Activated CD4-positive, alpha-beta T cell treated with anti-CD3 and anti-CD28 coated beads for 36 hours (primary cell): ENCODE measurements at regions of chr17 and their contacts with region 1.

Region 1: DNA sequence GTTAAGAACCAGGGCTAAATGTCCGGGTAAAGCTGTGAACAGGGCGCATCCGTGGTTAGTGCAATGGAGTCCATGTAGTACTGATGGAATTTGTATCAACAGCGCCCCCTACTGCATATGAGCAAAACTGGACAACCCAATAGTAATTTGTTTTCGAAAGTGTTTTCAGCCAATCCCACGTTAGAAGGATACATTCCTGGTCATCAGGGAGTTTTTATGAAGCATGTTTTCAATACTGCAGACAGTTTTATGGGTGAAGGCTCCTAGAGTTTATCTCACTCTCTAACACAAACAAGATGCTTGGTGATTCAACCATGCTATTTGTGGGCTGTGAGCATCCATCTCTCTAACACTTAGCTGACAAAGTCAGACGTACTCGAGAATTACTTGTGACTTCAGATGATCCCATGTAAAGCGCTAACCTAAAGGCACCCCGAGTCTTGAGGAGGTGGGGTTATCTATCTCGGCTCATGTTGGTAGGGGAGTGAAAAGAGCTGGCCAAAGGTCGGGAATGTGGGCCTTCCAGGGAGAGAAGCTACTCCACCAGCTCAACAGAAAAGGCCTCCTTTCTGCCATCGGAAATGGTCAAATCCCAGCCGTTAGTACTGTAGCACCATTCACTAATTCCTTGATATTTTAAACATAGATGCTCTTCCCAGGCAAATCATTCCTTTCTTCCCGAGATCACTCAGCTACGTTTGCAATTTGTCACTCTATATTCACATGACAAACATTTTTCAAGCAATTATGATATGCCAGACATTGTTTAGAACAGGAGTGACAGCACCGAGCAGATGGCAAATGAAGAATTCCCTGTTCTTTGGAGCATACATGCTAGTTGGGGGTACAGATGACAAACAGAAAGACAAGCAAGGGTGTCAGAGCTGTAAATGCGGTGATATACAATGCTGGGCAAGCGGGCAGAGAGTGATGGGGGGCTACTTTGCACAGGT is 46.9 kb upstream of the HNF1B start:
- DNase-seq: peak; percentile 72
- ATAC-seq: peak; percentile 98
- H3K4me3 Mint-ChIP-seq: no peak overlapping the region
- H3K27ac Mint-ChIP-seq: no peak overlapping the region
- H3K4me1 Mint-ChIP-seq: no peaks in the 10 kb centered on the region
- H3K27me3 Mint-ChIP-seq: peaks cover 18% of the 10 kb centered on the region

Region 2: DNA sequence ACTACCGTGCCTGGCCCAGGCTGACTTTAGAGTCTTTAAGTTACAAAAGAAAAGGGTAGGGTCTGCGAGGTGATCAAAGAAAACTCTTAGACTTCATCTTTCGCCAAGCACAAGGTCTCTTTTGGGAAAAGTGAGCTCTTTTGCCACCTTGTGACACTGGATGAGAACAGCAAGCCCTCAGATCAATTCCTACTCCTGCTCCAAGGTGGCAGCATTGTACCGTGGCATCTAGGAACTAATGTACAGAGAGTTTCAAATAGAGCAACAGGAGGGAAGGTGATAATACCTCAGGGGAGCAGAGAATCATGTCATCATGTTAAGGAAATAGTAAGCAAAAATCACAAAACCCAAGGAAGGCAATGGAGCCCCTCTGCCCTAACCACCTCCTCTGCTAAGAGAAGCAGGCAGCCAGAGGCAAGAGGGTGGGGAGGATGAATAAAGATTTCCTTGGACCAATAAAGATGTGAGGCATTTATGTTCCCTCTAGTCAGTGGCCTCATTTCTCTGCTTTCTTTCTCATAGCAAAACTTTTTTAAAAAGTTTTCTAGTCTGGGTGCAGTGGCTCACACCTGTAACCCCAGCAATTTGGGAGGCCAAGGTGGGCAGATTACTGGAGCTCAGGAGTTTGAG is 418.1 kb before region 1 on chr17:
- CTCF ChIA-PET with region 1: interaction called, 3 read pairs
- POLR2A ChIA-PET with region 1: no interaction called
- intact Hi-C with region 1: loop called in 1 of 2 experiments (anchors 10 kb)
- DNase-seq: peak; percentile 82
- ATAC-seq: peak; percentile 98
- H3K4me3 Mint-ChIP-seq: no peak overlapping the region
- H3K27ac Mint-ChIP-seq: no peak overlapping the region
- H3K4me1 Mint-ChIP-seq: peaks cover 5% of the 10 kb centered on the region
- H3K27me3 Mint-ChIP-seq: no peaks in the 10 kb centered on the region

Region 3: GRCh38 chr17:37527249-37527851 is 264.4 kb before region 1 on chr17:
- CTCF ChIA-PET with region 1: interaction called, 8 read pairs
- POLR2A ChIA-PET with region 1: no interaction called
- intact Hi-C with region 1: loop called (anchors 1 kb)
- DNase-seq: peak; percentile 25
- ATAC-seq: peak; percentile 86
- H3K4me3 Mint-ChIP-seq: no peak overlapping the region
- H3K27ac Mint-ChIP-seq: no peak overlapping the region
- H3K4me1 Mint-ChIP-seq: peaks cover 7% of the 10 kb centered on the region
- H3K27me3 Mint-ChIP-seq: no peaks in the 10 kb centered on the region

Region 4: GRCh38 chr17:37643118-37643766 is 148.5 kb before region 1 on chr17 and contains the start of gene DDX52:
- CTCF ChIA-PET with region 1: interaction called, 3 read pairs
- POLR2A ChIA-PET with region 1: no interaction called
- intact Hi-C with region 1: loop called (anchors 5 kb)
- DNase-seq: peak; percentile 93
- ATAC-seq: peak; percentile 99
- H3K4me3 Mint-ChIP-seq: peak within 1 kb of the TSS; percentile 94
- H3K27ac Mint-ChIP-seq: peak within 1 kb of the TSS; percentile 91
- H3K4me1 Mint-ChIP-seq: peaks cover 25% of the 10 kb centered on the region
- H3K27me3 Mint-ChIP-seq: peaks cover 24% of the 10 kb centered on the region
- total RNA-seq, gene DDX52: 34.6 to 41.7 TPM

Region 5: GRCh38 chr17:37701496-37701898 is 90.2 kb before region 1 on chr17:
- CTCF ChIA-PET with region 1: interaction called, 16 read pairs
- POLR2A ChIA-PET with region 1: no interaction called
- intact Hi-C with region 1: loop called (anchors 1 kb)
- DNase-seq: peak; percentile 75
- ATAC-seq: peak; percentile 67
- H3K4me3 Mint-ChIP-seq: no peak overlapping the region
- H3K27ac Mint-ChIP-seq: no peak overlapping the region
- H3K4me1 Mint-ChIP-seq: peaks cover 16% of the 10 kb centered on the region
- H3K27me3 Mint-ChIP-seq: peaks cover 23% of the 10 kb centered on the region

Region 6: GRCh38 chr17:37744961-37745800 is 46.5 kb before region 1 on chr17 and contains the start of gene HNF1B:
- CTCF ChIA-PET with region 1: interaction called, 12 read pairs
- POLR2A ChIA-PET with region 1: no interaction called
- intact Hi-C with region 1: loop called in 1 of 2 experiments (anchors 5 kb)
- DNase-seq: peak; percentile 46
- ATAC-seq: peak; percentile 49
- H3K4me3 Mint-ChIP-seq: peak within 1 kb of the TSS; percentile 10
- H3K27ac Mint-ChIP-seq: no peak within 1 kb of the TSS
- H3K4me1 Mint-ChIP-seq: peaks cover 19% of the 10 kb centered on the region
- H3K27me3 Mint-ChIP-seq: peaks cover 63% of the 10 kb centered on the region
- total RNA-seq, gene HNF1B: not detected